CD14-positive monocyte (primary cell): ENCODE measurements at regions of chr11 and their contacts with region 1.

Region 1: DNA sequence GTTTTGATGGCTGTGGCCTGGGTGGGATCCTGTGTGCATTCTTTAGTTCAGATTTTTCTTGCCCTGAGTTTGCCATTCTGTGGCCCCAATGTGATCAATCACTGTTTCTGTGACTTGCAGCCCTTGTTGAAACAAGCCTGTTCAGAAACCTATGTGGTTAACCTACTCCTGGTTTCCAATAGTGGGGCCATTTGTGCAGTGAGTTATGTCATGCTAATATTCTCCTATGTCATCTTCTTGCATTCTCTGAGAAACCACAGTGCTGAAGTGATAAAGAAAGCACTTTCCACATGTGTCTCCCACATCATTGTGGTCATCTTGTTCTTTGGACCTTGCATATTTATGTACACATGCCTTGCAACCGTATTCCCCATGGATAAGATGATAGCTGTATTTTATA is 620 bp downstream of the OR4C16 start:
- DNase-seq: no peak
- H3K4me3 ChIP-seq: no peak overlapping the region
- H3K4me3 Mint-ChIP-seq: no peak overlapping the region
- H3K27ac ChIP-seq: no peak overlapping the region
- H3K27ac Mint-ChIP-seq: no peak overlapping the region
- H3K4me1 ChIP-seq: no peaks in the 10 kb centered on the region
- H3K4me1 Mint-ChIP-seq: no peaks in the 10 kb centered on the region
- H3K27me3 ChIP-seq: no peaks in the 10 kb centered on the region
- H3K27me3 Mint-ChIP-seq: no peaks in the 10 kb centered on the region
- CTCF ChIP-seq: no peak

Region 2: GRCh38 chr11:55634813-55635212 is 62.3 kb after region 1 on chr11 and contains the start of gene OR4P4:
- intact Hi-C with region 1: loop called in 1 of 2 experiments (anchors 10 kb)
- DNase-seq: no peak
- H3K4me3 ChIP-seq: no peak within 1 kb of the TSS
- H3K4me3 Mint-ChIP-seq: no peak within 1 kb of the TSS
- H3K27ac ChIP-seq: no peak within 1 kb of the TSS
- H3K27ac Mint-ChIP-seq: no peak within 1 kb of the TSS
- H3K4me1 ChIP-seq: no peaks in the 10 kb centered on the region
- H3K4me1 Mint-ChIP-seq: no peaks in the 10 kb centered on the region
- H3K27me3 ChIP-seq: no peaks in the 10 kb centered on the region
- H3K27me3 Mint-ChIP-seq: no peaks in the 10 kb centered on the region
- CTCF ChIP-seq: no peak
- polyA plus RNA-seq, gene OR4P4: not detected